PC-9 (cell line): ENCODE measurements at regions of chr12 and their contacts with region 1.

Region 1: GRCh38 chr12:31589904-31590641 is 863 bp downstream of the DENND5B start:
- DNase-seq: peak; percentile 40 to 64
- H3K4me3 ChIP-seq: peak overlapping the region; percentile 78
- H3K27ac ChIP-seq: no peak overlapping the region
- H3K4me1 ChIP-seq: peaks cover 12% of the 10 kb centered on the region
- H3K27me3 ChIP-seq: no peaks in the 10 kb centered on the region
- CTCF ChIP-seq: no peak

Region 2: GRCh38 chr12:31306621-31307265 is 283.3 kb before region 1 on chr12:
- CTCF ChIA-PET with region 1: no interaction called
- POLR2A ChIA-PET with region 1: interaction called, 27 read pairs
- intact Hi-C with region 1: no loop called
- DNase-seq: no peak
- H3K4me3 ChIP-seq: no peak overlapping the region
- H3K27ac ChIP-seq: no peak overlapping the region
- H3K4me1 ChIP-seq: no peaks in the 10 kb centered on the region
- H3K27me3 ChIP-seq: no peaks in the 10 kb centered on the region
- CTCF ChIP-seq: no peak

Region 3: DNA sequence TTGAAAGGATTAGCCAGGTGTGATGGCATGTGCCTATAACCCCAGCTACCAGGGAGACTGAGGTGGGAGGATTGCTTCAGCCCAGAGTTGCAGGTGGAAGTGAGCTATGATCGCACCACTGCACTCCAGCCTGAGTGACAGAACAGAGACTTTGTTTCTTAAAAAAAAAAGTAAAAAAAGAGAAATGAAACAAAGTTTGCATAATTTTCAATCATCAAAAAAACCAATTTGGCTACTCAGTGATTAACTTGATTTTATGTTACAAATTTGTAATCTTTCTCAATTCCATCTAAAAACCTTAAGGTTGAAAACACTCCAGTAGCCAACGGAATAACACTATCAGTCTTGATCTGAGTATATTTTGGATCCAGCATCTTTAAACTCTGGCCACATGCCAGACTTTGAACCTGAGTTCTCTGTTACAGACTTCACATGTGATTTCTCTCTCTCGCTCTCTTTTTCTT is 13.5 kb after region 1 on chr12:
- CTCF ChIA-PET with region 1: no interaction called
- POLR2A ChIA-PET with region 1: interaction called, 17 read pairs
- intact Hi-C with region 1: no loop called
- DNase-seq: no peak
- H3K4me3 ChIP-seq: no peak overlapping the region
- H3K27ac ChIP-seq: no peak overlapping the region
- H3K4me1 ChIP-seq: no peaks in the 10 kb centered on the region
- H3K27me3 ChIP-seq: no peaks in the 10 kb centered on the region
- CTCF ChIP-seq: no peak